ENCODE measurements at regions of chr6 and their contacts with region 1.

Region 1: GRCh38 chr6:132768051-132768517 is 10.4 kb upstream of the VNN2 start:
- DNase-seq: peak; percentile 16
- H3K4me3 ChIP-seq: no peak overlapping the region
- H3K27ac ChIP-seq: no peak overlapping the region
- H3K4me1 ChIP-seq: peaks cover 6% of the 10 kb centered on the region
- H3K27me3 ChIP-seq: no peaks in the 10 kb centered on the region
- CTCF ChIP-seq: peak; percentile 55

Region 2: GRCh38 chr6:132669690-132670291 is 98.3 kb before region 1 on chr6:
- intact Hi-C with region 1: loop called (anchors 5 kb)
- DNase-seq: no peak
- H3K4me3 ChIP-seq: no peak overlapping the region
- H3K27ac ChIP-seq: no peak overlapping the region
- H3K4me1 ChIP-seq: peaks cover 4% of the 10 kb centered on the region
- H3K27me3 ChIP-seq: no peaks in the 10 kb centered on the region
- CTCF ChIP-seq: peak; percentile 66

Measured in left ventricle myocardium inferior (tissue), 1 donor.